WTC11 (cell line): ENCODE measurements at regions of chr5 and their contacts with region 1.

Region 1: GRCh38 chr5:138641547-138642298 is 66.5 kb upstream of the HSPA9 start:
- DNase-seq: peak; percentile 95
- ATAC-seq: peak; percentile 89
- H3K4me3 Mint-ChIP-seq: no peak overlapping the region
- H3K27ac Mint-ChIP-seq: peak overlapping the region; percentile 53; the same call in 1 of the 2 replicates
- H3K4me1 Mint-ChIP-seq: peaks cover 35% of the 10 kb centered on the region
- H3K27me3 Mint-ChIP-seq: no peaks in the 10 kb centered on the region
- CTCF ChIP-seq: peak; percentile 96

Region 2: DNA sequence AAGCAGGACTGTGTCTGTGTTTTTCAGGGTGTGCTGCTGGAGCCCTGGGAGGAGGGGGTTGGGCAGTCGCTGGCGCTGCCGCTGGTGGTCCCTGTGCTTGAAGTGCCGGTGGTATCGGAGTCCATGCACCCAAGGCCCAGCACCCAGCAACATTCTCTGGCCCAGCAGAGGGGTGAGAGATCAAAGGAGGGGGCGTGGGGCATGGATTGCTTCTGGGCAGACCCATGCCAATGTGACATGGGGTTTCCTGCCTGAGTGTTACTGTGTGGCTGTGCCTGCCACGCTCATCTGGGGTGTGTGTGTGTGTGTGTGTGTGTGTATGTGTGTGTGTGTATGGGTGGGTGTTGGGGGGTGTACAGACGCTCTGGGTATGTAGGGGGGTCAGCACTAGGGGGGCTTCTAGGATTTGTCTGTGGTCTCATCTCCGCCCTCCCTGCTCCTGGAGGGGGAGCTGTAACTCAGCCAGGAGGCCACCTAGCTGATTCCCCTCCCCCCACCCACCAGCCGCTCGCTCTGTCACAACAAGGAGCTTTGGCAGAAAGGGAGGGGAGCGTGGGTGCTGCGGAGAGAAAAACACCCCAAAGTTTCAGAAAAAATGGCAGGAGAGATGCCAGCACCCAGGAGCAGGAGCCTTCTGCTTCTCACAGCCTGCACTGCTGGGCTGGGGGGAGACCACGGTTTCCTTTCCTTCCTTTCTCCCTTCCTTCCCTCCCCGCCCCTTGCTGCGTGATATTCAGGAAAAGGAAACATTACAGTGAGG is 30.6 kb before region 1 on chr5:
- CTCF ChIA-PET with region 1: interaction called, 17 read pairs
- POLR2A ChIA-PET with region 1: no interaction called
- DNase-seq: peak; percentile 66
- ATAC-seq: peak; percentile 57
- H3K4me3 Mint-ChIP-seq: peak overlapping the region; percentile 52
- H3K27ac Mint-ChIP-seq: peak overlapping the region; percentile 39
- H3K4me1 Mint-ChIP-seq: peaks cover 24% of the 10 kb centered on the region
- H3K27me3 Mint-ChIP-seq: no peaks in the 10 kb centered on the region
- CTCF ChIP-seq: no peak

Region 3: DNA sequence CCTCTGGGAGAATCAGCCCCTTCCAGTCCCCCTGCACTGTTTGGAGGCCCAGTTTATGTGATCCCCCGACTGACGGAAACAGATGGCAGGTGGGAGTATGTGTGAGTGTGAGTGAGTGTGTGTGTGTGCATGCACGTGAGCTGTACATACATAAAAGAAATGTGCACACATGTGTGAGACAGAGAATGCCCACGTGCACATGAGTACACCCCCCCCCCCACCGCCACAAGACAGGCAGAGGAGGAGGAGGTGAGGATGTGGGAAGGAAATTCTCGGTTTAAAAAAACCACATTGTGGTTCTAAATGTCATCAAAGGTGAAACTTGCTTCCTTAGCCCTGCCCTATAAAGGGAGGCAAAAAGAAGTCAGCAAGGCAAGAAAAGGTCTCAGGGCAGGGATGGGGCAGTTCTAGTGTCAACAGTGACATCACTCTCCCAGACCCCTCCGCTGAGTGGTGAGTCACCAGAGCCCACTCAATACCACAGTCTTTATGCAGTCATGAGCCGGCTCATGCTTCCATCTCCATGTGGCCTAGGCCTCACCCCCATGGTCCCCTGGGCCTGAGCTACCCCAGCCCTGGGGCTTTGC is 12.7 kb after region 1 on chr5:
- CTCF ChIA-PET with region 1: interaction called, 19 read pairs
- POLR2A ChIA-PET with region 1: no interaction called
- DNase-seq: no peak
- ATAC-seq: no peak
- H3K4me3 Mint-ChIP-seq: no peak overlapping the region
- H3K27ac Mint-ChIP-seq: no peak overlapping the region; the same call in 1 of the 2 replicates
- H3K4me1 Mint-ChIP-seq: peaks cover 26% of the 10 kb centered on the region
- H3K27me3 Mint-ChIP-seq: peaks cover 3% of the 10 kb centered on the region; the same call in 1 of the 2 replicates
- CTCF ChIP-seq: no peak

Region 4: DNA sequence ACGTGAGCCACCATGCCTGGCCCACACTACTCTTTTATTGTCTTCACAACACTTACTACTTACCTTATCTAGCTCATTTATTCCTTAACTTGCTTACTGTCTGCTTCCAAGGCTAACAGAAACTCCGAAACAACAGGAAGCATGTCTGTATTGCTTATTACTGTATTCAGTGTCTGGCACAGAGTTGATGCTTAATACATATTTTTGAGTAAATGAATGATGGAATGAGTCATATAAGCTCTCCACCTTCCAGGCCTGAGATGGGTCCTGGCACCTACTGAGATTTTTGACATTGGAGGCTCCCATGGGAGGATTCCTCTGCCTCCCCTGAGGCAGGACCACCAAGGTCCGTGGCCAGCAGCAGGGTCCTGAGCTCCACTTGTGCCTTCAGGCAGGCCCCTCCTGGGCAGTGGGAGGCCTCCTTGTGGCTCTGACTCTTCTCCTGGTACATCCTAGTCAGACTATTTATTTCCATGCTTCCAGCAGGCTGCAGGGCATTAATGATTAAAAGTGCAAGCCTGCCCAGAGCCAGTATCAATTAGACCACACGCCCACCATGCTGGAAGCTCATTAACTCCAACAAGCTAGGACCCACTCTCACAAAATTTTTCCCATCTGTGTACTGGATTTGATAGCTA is 35.0 kb after region 1 on chr5:
- CTCF ChIA-PET with region 1: no interaction called
- POLR2A ChIA-PET with region 1: no interaction called
- DNase-seq: no peak
- ATAC-seq: no peak
- H3K4me3 Mint-ChIP-seq: no peak overlapping the region
- H3K27ac Mint-ChIP-seq: no peak overlapping the region
- H3K4me1 Mint-ChIP-seq: no peaks in the 10 kb centered on the region
- H3K27me3 Mint-ChIP-seq: no peaks in the 10 kb centered on the region; the same call in 1 of the 2 replicates
- CTCF ChIP-seq: no peak

Region 5: DNA sequence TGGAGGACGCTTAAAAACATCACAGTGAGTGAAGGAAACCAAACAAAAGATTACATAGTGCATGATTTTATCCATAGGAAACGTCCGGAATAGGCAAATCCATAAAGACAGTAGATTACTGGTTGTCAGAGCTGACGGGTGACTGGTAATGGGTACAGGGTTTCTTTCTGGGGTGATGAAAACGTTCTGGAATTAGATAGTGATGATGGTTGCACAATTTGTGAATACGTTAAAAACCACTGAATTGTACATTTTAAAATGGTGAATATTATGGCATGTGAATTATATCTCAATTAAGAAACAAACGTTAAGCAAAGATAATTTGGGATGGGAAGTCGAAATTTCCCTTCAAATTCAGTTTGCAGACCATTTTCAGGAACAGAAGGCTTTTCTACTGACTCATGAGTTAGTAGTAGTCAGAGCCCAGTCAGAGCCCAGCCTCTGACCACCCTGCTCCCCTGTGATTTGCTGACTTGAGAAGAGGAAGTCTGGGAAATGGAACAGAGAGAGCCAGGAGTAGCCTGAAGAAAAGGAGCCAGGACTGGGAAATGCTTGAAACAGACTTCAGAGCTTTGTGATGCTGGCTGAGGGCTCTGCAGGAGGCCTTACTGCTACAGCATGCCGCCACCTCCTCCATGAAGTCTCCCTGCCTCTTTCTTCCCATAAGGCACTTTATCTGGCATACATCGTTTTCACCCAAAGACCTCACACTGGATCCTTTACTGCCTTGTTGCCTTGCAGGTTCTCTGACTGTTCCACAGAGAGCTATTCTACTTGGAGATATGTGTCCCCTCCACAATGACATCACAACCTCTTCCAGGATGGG is 65.1 kb after region 1 on chr5:
- CTCF ChIA-PET with region 1: interaction called, 12 read pairs
- POLR2A ChIA-PET with region 1: interaction called, 5 read pairs
- DNase-seq: no peak
- ATAC-seq: peak; percentile 61
- H3K4me3 Mint-ChIP-seq: no peak overlapping the region
- H3K27ac Mint-ChIP-seq: no peak overlapping the region
- H3K4me1 Mint-ChIP-seq: peaks cover 50% of the 10 kb centered on the region
- H3K27me3 Mint-ChIP-seq: no peaks in the 10 kb centered on the region
- CTCF ChIP-seq: no peak

Region 6: DNA sequence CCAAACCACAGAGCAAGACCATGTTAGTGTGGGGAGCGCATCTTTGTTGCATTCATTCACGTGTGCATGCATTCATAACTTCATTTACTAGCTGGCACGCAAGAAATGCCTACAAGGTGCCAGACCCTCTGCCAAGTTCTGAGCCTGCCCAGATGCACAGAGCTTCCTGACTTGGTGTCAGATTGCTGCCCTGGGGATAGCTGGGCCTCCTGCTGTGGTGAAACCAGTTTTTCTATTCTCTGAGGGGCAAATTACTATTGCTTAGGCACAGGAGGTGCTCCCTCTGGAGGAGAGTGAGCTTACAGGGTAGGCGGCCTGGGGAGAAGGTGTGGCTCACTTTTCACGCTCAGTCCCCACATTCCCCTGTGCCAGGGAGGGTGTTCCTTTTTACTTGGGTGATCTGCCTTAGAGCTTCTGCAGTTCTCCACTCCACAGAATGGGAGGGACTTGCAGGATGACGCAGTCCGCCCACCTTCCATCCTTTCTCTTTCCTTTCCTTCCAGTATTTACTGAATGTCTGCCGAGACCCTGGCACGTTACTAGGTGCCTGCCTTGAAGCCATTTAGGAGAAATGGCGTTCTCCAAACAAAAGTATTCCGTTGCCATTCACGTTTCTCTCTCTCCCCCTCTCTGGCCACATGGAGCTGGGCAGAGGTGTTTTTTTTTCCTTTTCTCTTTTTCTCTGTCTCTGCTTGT is 83.6 kb after region 1 on chr5:
- CTCF ChIA-PET with region 1: interaction called, 43 read pairs
- POLR2A ChIA-PET with region 1: interaction called, 5 read pairs
- DNase-seq: peak; percentile 78
- ATAC-seq: peak; percentile 90
- H3K4me3 Mint-ChIP-seq: peak overlapping the region; percentile 30; the same call in 1 of the 2 replicates
- H3K27ac Mint-ChIP-seq: peak overlapping the region; percentile 96
- H3K4me1 Mint-ChIP-seq: peaks cover 45% of the 10 kb centered on the region
- H3K27me3 Mint-ChIP-seq: no peaks in the 10 kb centered on the region; the same call in 1 of the 2 replicates
- CTCF ChIP-seq: 0 out of 2 replicates have a peak, but pooled peaks have one; percentile 11

Region 7: GRCh38 chr5:138745268-138745667 is 103.5 kb after region 1 on chr5:
- CTCF ChIA-PET with region 1: no interaction called
- POLR2A ChIA-PET with region 1: no interaction called
- DNase-seq: no peak
- ATAC-seq: no peak
- H3K4me3 Mint-ChIP-seq: no peak overlapping the region
- H3K27ac Mint-ChIP-seq: 0 out of 2 replicates have a peak overlapping the region, but pooled peaks have one; percentile 40
- H3K4me1 Mint-ChIP-seq: peaks cover 16% of the 10 kb centered on the region
- H3K27me3 Mint-ChIP-seq: no peaks in the 10 kb centered on the region
- CTCF ChIP-seq: no peak

Region 8: DNA sequence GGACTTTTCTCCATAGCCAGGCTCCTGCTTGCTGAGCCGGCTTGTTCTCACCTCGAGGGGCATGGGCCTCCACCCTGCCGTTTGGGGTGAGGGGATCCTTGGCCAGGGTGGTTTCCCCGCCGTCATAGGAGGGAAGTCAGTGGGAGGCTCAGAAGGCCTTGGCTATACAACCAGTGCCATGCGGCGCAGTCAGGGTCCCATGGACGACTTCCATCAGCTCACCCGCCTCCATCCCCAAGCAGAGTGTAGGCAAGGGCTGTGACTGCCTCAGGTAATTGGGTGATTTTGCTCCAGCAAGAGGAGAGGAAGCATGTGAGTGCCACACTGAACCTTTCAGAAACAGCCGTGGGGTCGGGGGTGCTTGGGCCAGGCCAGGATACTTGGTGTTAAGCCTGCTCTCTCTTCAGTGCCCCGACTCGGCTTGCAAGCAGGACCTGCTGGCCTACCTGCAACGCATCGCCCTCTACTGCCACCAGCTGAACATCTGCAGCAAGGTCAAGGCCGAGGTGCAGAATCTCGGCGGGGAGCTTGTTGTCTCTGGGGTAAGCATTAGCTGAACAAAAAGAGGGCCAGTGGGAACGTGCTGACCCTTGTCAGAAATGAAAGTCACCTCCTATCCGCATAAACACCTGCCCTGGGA is 290.6 kb after region 1 on chr5:
- CTCF ChIA-PET with region 1: interaction called, 11 read pairs
- POLR2A ChIA-PET with region 1: no interaction called
- DNase-seq: peak; percentile 71
- ATAC-seq: peak; percentile 81
- H3K4me3 Mint-ChIP-seq: no peak overlapping the region
- H3K27ac Mint-ChIP-seq: peak overlapping the region; percentile 6; the same call in 1 of the 2 replicates
- H3K4me1 Mint-ChIP-seq: peaks cover 31% of the 10 kb centered on the region
- H3K27me3 Mint-ChIP-seq: no peaks in the 10 kb centered on the region
- CTCF ChIP-seq: no peak

Region 9: DNA sequence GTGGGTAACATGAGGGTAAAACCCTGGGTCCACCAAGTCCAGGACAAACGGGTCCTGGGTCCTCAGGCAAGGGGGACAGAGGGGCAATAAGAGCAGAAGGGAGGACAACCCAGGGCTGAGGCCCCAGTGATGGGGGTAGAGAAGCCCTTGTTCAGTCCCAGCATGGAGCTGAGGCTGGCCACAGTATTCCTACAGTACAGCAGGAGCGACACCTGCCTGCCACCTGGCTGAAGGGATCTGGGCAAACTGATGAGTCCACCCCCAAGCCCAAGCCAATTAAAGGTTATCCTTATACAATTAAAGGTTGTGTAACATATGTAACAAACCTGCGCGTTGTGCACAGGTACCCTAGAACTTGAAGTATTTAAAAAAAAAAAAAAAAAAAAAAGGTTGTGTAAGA is 331.1 kb after region 1 on chr5:
- CTCF ChIA-PET with region 1: interaction called, 11 read pairs
- POLR2A ChIA-PET with region 1: no interaction called
- DNase-seq: peak; percentile 43
- ATAC-seq: peak; percentile 84
- H3K4me3 Mint-ChIP-seq: no peak overlapping the region
- H3K27ac Mint-ChIP-seq: no peak overlapping the region
- H3K4me1 Mint-ChIP-seq: peaks cover 15% of the 10 kb centered on the region
- H3K27me3 Mint-ChIP-seq: no peaks in the 10 kb centered on the region; the same call in 1 of the 2 replicates
- CTCF ChIP-seq: no peak